ENCODE measurements at regions of chr12 and their contacts with region 1.

Region 1: DNA sequence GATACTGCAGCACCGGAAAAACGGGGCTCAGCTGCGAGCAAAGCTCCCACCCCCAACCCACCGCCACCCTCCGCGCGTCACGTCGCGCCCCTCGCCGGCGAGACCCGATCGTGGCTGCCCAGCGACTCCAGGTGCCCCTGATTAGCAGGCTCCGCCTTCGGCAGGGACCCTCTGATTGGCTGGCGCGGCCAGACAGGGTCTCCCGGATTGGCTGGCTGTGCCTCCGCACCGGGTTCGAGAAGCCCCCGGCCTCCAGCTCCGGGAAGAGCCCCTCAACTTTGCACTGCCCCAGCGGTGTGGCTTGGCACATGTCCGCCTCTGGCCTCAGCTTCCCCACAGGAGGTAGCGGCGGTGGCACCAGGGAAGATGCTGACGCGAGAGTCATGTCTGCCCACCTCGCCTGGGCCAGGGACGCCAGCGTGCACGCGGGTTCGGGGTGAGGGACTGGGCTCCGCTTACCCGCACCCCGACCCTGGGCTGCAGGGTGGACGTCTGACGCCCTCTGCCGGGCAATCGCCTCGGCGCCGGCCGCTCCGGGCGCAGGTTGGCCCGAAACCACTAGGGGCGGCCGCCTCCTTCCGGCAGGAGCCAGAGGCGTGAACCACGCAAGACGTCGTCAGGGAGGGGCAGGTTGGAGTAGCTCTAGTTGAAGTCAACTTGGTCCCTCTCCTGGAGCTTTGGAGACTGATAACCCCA is 498 bp upstream of the RHOF start:
- DNase-seq: peak; percentile 96
- ATAC-seq: peak; percentile 74

Region 2: DNA sequence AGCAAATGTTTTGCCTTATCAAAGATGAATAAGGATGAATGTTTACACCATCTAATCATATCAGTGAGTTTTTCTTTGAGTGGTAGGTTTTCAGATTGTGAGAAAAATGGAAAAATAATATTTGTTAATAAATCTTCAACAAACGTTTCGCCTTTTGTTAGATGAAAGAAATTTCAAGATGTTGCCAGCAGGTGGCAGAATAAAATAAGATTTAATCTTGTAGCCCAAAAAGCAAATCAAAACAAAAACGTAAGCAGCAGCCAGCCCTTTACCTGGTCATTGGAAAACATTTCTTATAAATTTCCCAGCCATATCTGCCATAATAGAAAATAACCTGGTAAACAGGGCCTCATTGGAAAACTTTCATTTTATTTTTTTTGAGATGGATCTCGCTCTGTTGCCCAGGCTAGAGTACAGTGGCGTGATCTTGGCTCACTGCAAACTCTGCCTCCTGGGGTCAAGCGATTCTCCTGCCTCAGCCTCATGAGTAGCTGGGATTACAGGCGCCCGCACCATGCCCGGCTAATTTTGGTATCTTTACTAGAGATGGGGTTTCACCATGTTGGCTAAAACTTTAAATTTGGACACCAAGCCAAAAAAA is 96.8 kb before region 1 on chr12:
- intact Hi-C with region 1: loop called (anchors 1 kb)
- DNase-seq: no peak
- ATAC-seq: no peak

Region 3: DNA sequence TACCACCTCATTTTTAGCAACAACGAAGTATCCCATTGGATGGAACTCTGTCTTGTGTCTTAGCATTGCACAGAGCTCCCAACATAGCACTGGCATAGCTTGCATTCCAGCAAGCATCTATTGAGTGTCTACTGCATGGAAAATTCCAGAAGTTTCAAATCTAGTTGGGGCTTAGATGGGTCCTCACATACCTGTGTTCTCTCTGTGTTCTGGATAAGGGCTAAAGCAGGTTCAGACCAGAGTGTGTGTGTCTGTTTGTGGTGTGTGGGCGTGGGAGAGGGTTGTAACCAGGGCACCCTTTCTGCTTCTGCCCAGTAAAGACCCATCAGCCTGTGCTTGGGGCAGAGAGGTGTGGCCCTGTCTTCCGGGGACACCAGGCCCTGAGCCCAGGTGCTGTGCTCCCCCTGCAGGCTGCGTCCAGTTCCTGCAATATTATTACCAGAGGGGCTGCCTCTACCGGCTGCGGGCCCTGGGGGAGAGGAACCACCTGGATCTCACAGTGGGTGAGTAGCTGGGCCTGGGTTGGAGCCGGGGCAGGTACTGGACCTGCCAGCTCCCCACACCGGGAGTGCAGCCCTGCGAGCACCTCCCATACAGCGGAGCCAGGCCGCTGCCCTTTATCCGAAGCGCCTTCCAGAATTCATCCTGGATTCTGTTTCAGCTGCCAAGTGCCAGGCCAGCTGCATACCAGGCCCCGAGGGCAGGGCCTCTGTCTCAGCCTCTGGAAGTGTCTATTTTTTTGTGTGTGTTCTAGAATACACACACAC is 20.8 kb before region 1 on chr12:
- intact Hi-C with region 1: loop called (anchors 2 kb)
- DNase-seq: peak; percentile 85
- ATAC-seq: peak; percentile 74

Region 4: GRCh38 chr12:121811434-121812319 is 17.7 kb after region 1 on chr12:
- intact Hi-C with region 1: loop called (anchors 1 kb)
- DNase-seq: peak; percentile 89
- ATAC-seq: peak; percentile 89

Region 5: DNA sequence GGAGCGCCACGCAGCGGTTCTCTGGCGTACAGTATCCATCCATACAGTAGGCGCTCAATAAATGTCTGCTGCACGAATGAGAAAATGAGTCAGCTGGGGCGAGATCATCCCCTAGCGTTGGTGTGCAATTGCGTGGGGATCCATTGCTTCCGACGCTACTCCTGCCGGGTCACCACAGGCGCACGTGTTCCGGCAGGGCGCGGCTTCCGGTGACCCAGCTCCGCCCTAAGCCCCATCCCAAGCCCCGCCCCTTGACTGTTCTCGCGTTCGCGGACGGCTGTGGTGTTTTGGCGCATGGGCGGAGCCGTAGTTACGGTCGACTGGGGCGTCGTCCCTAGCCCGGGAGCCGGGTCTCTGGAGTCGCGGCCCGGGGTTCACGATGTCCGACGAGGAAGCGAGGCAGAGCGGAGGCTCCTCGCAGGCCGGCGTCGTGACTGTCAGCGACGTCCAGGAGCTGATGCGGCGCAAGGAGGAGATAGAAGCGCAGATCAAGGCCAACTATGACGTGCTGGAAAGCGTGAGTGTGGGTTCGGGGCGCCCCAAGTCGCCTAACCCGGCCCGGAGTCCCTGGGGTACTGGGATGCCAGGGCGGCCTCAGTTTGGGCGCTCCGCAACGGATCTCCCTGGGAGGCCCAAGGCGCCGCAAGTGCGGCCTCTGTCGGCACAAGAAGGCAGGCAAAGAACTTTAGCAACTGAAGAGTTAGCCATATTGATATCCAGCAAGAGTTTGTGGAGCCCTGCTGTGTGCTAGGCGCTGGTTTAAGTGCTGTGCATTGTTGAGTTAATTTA is 94.7 kb after region 1 on chr12 and contains the start of gene PSMD9:
- intact Hi-C with region 1: loop called (anchors 2 kb)
- DNase-seq: peak; percentile 99
- ATAC-seq: peak; percentile 99
- total RNA-seq, gene PSMD9: 35.4 TPM